Panc1 (cell line): ENCODE measurements at regions of chr12 and their contacts with region 1.

Region 1: DNA sequence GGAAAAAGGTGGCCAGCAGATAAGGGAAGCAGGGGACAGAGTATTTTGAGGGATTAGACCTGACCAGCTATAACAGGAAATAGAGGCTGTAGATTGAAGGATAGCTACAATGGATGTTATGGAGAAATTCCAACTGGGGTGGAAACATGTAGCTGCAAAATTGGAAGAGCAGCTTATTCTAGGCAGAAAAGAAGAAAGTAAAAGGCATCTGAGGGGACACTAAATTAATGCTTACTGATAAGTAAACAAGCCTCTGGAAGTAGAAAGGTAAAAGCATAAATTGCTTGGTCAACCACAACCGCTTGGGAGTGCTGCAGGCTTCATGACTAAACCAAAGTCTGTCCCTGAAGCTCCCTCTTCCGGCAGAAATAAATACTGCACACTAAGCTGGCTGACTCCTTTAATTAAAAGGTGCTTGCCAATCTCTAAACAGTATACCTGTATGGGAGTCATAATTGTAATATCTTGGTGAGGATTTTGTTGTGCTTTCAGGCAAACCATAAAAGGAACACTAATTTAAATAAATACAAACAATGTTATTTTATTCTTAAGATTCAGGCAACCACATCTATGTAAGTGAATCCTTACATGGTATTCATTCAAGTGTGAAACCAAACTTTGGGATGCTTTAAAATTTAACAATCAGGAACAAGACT is 7.7 kb downstream of the UBC start:
- DNase-seq: no peak
- ATAC-seq: peak; percentile 50
- H3K4me3 ChIP-seq: no peak overlapping the region
- H3K27ac ChIP-seq: peak overlapping the region; percentile 76
- H3K4me1 ChIP-seq: peaks cover 41% of the 10 kb centered on the region
- H3K27me3 ChIP-seq: no peaks in the 10 kb centered on the region
- CTCF ChIP-seq: peak; percentile 98

Region 2: DNA sequence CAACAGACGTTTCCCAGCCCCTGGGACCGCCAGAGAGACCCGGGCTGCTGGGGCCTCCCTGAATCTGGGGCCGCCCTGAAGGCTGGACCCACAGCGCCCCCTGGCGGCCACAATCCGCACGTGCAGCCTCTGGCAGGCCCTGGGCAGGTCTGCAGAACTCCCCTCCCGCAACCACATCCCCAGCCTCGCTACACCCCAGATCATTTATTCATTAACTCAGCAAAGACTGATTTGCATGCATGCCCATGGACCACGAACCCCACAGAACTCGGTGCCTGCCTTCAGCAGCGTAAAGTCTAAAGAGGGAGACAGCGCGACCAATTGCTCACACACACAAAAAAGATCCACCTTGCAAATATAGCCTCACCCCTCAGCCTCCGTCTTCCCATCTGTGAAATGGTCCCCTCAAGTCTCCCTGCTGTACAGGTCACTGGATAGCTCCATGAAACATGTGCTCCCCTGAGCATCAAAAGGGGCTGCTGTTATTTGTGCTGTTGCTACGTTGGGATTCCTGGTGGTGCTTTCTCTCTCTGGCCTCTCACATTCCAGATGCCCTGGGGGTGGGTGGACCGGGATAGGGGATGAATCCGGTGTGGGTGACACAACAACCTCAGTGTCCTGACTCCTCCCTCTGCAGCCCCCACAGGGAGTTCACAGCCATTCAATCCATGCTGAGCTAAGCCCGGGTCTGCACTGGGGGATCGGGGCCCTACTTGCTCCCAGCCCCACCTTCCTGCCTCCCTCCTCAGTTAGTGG is 139.5 kb before region 1 on chr12:
- CTCF ChIA-PET with region 1: no interaction called
- POLR2A ChIA-PET with region 1: no interaction called
- in situ Hi-C with region 1: no loop called
- intact Hi-C with region 1: loop called (anchors 10 kb)
- DNase-seq: no peak
- ATAC-seq: peak; percentile 85
- H3K4me3 ChIP-seq: no peak overlapping the region
- H3K27ac ChIP-seq: 0 out of 2 replicates have a peak overlapping the region, but pooled peaks have one; percentile 3
- H3K4me1 ChIP-seq: peaks cover 32% of the 10 kb centered on the region
- H3K27me3 ChIP-seq: no peaks in the 10 kb centered on the region
- CTCF ChIP-seq: peak; percentile 98

Region 3: DNA sequence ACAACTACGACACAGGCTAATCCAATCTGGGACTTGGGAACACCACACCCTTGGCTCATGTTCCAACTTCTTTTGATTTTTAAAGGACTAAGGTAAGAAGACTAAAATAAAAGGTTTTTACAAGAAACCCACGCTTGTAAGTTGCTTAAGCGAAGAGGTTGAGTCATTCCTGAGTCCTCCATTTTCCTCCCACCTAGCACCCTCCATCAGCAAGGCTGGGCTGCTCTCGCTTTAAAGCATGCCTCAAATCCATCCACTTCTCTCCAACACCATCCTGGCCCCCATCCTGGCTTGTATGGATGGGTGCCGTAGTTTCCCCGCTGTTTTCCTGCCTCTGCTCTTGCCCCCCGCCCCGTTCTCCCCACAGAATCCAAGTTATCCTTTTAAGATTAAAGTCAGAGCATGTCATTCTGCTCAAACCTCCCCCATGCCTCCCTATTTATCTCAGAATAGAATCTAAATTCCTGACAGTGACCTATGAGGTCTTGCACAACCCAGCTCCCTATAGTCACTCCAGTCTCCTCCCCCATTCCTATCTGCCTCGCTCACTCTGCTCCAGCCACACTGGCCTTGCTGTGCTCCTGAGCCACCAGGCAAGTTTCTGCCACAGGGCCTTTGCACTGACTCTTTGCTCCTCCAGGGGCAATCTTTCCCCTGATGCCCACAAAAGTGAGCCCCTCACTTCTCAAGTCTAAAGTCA is 77.6 kb before region 1 on chr12:
- CTCF ChIA-PET with region 1: interaction called, 3 read pairs
- POLR2A ChIA-PET with region 1: no interaction called
- in situ Hi-C with region 1: no loop called
- intact Hi-C with region 1: loop called (anchors 10 kb)
- DNase-seq: peak; percentile 36
- ATAC-seq: peak; percentile 72
- H3K4me3 ChIP-seq: no peak overlapping the region
- H3K27ac ChIP-seq: peak overlapping the region; percentile 91
- H3K4me1 ChIP-seq: peaks cover 60% of the 10 kb centered on the region
- H3K27me3 ChIP-seq: no peaks in the 10 kb centered on the region
- CTCF ChIP-seq: no peak

Region 4: DNA sequence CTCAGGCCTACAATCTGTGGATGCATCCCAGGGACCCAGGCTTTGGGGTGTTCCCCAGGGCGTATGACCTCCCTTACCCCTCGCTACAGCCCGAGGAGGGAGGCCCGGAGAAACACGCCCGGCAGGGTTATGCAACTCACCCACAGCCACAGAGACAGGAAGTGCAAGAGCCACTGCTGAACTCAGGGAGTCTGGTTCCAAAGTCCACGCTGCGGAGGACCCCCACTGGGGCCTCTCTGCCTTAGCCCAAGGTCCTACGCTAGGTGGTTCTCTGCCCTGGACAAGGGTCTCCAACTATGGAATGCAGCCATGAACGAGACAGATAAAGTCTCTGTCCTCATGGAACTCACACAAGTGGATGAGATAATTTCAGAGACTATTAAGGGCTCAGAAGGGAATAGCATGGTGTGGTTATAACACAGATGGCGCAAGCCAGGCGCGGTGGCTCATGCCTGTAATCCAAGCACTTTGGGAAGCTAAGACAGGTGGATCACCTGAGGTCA is 54.4 kb before region 1 on chr12:
- CTCF ChIA-PET with region 1: no interaction called
- POLR2A ChIA-PET with region 1: no interaction called
- in situ Hi-C with region 1: no loop called
- intact Hi-C with region 1: no loop called
- DNase-seq: no peak
- ATAC-seq: no peak
- H3K4me3 ChIP-seq: no peak overlapping the region
- H3K27ac ChIP-seq: no peak overlapping the region
- H3K4me1 ChIP-seq: peaks cover 38% of the 10 kb centered on the region
- H3K27me3 ChIP-seq: no peaks in the 10 kb centered on the region
- CTCF ChIP-seq: no peak

Region 5: DNA sequence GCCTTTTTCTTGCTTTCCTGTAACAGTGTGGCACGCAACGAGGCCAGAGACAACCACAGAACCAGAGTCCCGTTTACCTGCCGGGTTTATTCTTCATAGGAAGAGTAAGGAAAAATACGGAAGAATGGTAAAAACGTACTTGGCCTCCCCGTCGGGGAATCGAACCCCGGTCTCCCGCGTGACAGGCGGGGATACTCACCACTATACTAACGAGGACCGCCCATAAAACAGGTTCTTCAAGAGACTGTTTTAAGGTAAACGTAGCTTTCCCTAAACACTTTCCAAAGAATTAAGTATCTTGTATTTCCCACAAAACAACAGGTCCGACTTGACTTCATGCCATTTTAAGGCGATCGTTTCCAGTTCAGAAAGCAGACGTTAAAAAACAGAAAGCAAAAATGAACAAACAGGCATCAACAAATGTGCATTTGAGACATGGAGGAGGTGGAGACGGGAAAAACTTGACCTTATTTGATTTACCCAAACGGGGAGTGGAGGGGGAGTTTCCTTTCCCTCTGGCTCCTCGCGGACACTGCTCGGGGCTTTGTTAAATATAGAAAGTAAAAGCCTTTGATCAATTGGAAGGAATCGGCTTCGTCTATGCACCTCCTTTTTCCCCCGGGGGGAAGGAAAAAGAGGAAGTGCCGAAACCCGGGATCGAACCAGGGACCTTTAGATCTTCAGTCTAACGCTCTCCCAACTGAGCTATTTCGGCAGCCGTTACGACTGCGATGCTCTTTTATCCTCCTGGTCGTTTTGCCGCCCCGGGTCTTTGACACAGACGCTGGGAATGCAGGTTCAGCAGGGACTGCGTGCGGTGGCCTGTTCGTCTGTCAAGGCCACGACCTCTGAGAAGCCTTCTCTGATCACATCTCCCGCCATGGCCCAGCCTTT is 20.7 kb after region 1 on chr12:
- CTCF ChIA-PET with region 1: no interaction called
- POLR2A ChIA-PET with region 1: interaction called, 14 read pairs
- in situ Hi-C with region 1: no loop called
- intact Hi-C with region 1: no loop called
- DNase-seq: no peak
- ATAC-seq: peak; percentile 79
- H3K4me3 ChIP-seq: peak overlapping the region; percentile 87 to 100
- H3K27ac ChIP-seq: peak overlapping the region; percentile 96
- H3K4me1 ChIP-seq: peaks cover 13% of the 10 kb centered on the region
- H3K27me3 ChIP-seq: no peaks in the 10 kb centered on the region
- CTCF ChIP-seq: no peak

Region 6: DNA sequence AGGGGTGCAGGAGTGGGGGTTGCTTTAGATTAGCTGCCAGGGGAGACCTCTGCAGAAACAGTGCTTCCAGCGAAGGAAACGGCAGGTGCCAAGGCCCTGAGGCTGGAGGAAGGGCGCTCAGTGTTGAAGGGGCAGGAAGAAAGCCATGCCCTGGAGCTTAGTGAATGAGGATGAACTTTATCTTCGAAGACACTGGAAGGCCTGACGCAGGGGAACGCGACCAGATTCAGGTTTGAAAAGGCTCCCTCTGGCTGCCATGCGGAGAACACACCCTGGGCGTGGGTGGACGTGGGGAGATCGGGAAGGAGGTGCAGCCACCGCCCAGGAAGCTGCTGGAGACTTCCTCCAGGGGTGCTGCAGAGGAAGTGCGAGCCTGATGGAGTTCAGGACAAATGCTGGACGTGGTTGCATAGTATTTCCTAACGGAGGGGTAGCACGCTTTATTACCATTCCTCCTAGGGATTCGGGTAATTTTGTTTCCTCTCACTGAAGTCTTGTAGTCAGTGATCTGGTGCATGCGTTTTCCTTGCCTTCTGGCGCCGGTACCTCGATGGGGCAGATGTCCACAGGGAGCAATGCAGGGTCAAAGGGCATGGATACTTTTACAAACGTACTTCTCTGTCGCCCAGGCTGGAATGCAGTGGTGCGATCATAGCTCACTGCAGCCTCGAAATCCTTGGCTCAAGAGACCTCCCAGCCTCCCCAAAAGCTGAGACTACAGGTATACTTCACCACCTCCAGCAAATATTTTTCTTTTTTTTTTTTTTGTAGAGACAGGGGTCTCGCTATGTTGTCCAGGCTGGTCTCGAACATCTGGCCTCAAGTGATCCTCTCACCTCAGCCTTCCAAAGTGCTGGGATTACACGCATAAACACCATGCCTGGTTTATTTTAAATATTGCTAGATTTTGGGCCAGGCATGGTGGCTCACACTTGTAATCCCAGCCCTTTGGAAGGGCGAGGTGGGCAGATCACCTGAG is 34.1 kb after region 1 on chr12:
- CTCF ChIA-PET with region 1: interaction called, 3 read pairs
- POLR2A ChIA-PET with region 1: interaction called, 14 read pairs
- in situ Hi-C with region 1: no loop called
- intact Hi-C with region 1: no loop called
- DNase-seq: no peak
- ATAC-seq: peak; percentile 67
- H3K4me3 ChIP-seq: peak overlapping the region; percentile 44 to 66
- H3K27ac ChIP-seq: peak overlapping the region; percentile 97
- H3K4me1 ChIP-seq: peaks cover 29% of the 10 kb centered on the region
- H3K27me3 ChIP-seq: no peaks in the 10 kb centered on the region
- CTCF ChIP-seq: peak; percentile 93